ENCODE measurements at regions of chr14 and their contacts with region 1.

Region 1: GRCh38 chr14:20613094-20614037 is 22.2 kb upstream of the RNASE12 start:
- DNase-seq: peak; percentile 88
- ATAC-seq: peak; percentile 92

Region 2: DNA sequence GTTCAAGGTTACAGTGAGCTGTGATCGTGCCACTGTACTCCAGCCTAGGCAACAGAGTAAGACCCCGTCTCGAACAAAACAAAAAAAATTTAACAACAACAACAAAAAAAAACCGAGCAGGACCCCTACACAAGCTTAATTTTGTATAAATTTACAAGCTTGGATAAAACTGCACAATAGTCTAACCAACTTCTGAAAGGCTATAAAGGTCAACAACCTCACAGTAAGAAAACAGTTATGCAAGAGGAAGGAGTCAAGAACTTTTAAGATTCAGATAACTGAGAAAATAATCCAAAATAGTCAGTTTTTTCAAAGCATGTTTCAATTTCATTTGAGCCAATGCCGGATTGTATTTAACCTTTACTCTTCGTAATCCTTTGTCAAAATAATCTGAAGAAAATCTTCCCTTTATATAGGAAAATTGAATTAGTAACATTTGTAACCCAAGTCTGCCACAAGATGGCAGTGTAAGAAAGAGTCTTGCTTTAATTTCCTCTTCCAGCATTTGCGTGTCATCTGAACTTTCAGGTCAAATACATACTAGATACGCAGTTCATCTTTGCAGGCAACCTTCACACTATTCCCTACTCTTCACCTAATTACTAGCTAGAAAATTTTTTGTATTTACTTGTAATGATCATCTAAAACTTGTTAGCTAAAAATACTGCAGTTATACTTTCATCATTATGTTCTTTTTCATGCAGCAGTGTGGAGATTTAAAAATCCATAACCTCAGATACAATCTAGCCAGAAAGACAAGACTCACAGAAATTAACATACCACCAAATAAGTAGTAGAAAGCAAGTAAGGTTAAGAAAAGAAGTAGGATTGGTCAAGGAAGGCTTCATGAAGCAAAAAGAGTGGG is 286.1 kb before region 1 on chr14:
- intact Hi-C with region 1: loop called (anchors 10 kb)
- DNase-seq: no peak
- ATAC-seq: peak; percentile 74

Region 3: GRCh38 chr14:20684662-20685456 is 71.5 kb after region 1 on chr14:
- intact Hi-C with region 1: loop called (anchors 5 kb)
- DNase-seq: no peak
- ATAC-seq: peak; percentile 43